ENCODE measurements at regions of chr1 and their contacts with region 1.

Region 1: DNA sequence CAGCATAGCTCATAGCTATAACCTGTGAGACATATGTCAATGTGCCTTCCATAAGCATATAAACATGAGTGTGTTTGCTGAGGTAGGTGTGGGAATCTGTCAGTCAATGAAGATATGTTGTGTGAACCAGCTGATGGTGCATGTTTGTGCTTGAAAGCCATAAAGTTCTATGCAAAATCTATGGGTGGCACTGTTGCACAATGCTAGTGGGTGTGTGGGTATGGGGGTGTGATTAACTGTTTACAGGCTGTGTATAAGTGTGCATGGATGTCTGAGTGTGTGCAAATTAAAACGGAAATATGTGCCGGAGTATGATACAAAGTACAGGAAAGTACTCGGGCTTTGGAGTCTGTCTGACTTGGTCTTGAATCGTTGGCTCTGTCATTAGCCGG is 1.0 kb upstream of the ATP2B4 start:
- DNase-seq: no peak
- H3K4me3 ChIP-seq: peak overlapping the region in 2 of 3 donors; percentile 63 to 69
- H3K27ac ChIP-seq: peak overlapping the region; percentile 85 to 87
- H3K4me1 ChIP-seq: peaks cover 4% of the 10 kb centered on the region in 2 donors
- H3K27me3 ChIP-seq: no peaks in the 10 kb centered on the region
- CTCF ChIP-seq: peak; percentile 24 to 36 (median 31)
- POLR2A ChIP-seq: no peak

Region 2: DNA sequence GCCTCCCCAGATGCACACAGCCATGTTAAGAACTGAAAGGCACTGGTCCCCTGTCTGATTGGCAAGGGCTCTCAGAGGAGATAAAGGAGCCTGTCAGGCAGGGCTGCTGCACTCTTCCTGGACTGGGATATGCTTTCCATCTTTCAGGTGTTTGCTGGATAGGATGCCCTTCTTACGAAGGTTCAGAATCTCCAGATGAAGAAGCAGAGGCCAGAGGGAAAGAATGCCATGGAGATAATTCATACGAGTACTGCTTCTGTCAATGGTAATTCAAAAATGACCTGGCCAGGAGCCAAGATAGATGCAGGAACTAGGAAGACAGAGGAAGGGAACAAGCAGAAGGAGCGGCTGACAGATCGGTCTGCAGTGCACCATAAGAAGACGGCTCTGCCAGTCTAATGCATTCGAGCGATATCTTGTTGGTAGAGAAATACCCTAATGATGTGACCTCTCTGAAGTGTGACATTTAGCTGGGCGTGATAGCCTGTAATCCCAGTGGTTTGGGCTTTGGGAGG is 15.6 kb before region 1 on chr1:
- intact Hi-C with region 1: loop called (anchors 1 kb)
- DNase-seq: no peak
- H3K4me3 ChIP-seq: no peak overlapping the region
- H3K27ac ChIP-seq: no peak overlapping the region
- H3K4me1 ChIP-seq: no peaks in the 10 kb centered on the region
- H3K27me3 ChIP-seq: no peaks in the 10 kb centered on the region
- CTCF ChIP-seq: no peak
- POLR2A ChIP-seq: no peak

Region 3: DNA sequence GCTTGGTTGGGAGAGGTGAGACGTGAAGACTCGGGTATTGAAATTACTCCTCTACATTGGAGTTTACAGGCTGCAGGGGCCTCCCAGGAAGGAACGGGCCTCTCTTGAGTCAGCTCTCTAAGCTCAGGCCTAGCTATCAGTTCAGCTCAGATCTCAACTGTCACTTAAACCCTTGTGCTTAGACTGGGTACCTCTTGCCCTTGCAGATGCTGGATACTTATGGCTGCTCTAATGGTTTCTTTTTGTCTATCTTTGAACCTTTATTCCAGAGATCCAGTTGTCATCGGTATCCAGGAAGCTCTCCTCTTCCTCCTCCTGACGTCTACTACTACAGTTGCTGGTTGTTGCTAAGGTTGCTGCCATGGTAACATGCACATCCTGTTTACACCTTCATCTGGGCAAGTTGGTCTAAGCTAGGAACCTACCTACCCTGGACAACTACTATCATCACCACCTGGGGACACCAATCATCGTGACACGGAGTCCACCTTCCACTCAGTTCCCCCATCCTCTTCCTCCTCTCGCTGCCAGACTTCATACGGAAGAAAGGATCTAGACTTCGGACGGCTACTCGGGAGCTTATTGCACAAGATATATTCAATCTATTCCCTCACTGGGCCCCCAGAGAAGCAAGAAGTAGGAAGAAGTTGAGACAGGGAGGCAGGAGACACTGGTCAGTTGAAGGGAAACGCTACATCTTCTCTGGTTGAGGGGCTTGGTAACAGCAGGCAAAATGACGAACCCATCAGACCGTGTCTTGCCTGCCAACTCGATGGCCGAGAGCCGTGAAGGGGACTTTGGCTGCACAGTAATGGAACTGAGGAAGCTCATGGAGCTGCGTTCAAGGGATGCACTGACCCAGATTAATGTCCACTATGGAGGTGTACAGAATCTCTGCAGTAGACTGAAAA is 57.1 kb after region 1 on chr1:
- intact Hi-C with region 1: loop called (anchors 5 kb)
- DNase-seq: no peak
- H3K4me3 ChIP-seq: no peak overlapping the region
- H3K27ac ChIP-seq: peak overlapping the region in 1 of 2 donors; percentile 28
- H3K4me1 ChIP-seq: no peaks in the 10 kb centered on the region
- H3K27me3 ChIP-seq: no peaks in the 10 kb centered on the region
- CTCF ChIP-seq: no peak
- POLR2A ChIP-seq: no peak

Measured in breast epithelium (tissue), 4 donors.